ENCODE measurements at regions of chr22 and their contacts with region 1.

Region 1: DNA sequence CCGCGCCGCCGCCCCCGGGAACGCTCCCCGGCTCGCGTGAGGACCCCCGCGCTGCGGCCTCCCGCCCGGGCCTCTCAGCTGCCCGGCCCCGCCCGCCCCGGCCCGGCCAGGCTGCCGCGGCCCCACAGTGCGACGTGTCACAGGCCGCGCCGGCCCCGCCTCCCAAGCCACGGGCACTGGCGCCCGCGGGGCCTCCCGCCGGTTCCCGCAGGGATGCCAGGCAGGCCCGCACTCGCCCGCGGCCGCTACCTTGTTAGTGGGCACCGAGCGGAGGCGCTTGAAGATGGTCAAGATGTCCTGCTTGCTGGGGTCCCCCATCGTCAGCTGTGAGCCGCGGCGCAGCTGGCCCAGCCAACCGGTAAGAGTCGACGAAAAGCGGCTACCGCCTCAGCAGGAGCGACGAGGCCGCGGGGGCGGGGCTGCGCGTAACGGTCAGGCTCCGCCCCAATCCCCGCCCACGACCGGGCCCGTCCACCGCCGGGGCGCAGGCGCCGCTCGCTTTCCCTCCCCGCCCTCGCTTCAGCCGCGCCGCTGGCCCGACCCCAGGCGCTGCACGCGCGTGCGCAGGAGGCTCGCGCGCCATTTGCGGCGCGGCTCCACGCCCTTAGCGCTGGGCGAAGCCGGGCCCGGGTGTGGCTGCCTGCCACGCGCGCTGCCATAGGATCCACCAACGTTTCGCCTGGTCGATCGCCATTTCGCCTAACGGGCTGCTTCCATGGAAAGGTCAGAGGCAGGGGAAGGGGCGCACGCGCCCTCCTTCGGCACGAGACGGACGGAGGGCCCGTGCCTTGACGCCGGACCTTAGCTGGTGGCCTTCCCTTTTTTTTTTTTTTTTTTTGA is at the start of gene ARFGAP3:
- DNase-seq: peak; percentile 96
- H3K4me3 Mint-ChIP-seq: peak within 1 kb of the TSS; percentile 86
- H3K27ac Mint-ChIP-seq: peak within 1 kb of the TSS; percentile 90
- H3K4me1 Mint-ChIP-seq: peaks cover 10% of the 10 kb centered on the region
- H3K27me3 Mint-ChIP-seq: no peaks in the 10 kb centered on the region
- total RNA-seq, gene ARFGAP3: 40.6 to 45.5 TPM

Region 2: DNA sequence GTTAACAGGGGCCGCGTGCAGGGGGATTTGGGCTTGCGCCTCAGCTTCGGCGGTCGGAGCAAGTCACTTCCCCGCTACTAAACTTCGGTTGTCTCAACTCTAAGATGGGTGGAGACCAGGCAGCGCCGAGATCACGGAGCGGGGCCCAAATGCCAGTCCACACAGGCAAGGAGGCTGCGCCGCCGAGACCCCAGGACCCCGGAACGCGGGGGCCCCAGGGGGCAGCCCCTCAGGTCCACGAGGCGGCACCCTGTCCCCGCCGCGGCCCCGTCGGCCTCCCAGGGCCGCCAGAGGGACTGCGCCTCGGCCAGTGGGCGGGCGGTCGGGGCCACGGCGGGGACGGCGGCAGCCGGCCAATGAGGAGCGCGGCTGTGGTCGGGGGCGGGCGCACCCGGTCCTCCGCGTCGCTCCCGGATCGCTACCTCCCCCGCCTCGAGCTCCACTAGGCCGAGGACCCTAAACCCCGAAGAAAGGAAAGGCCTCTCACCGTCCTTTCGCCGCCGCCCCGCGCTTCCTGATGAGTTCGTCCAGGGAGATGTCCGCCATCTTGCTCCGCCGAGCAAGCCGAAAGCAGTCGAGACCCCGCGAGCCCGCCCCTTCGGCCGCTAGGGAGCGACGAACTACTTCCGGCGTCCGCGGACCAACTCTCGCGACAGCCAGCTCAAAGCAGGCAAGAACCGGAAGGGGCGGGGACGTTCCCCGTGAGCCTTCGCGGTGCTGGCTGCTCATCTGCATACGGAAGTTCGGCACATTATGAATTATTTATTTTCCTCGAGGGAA is 242.6 kb before region 1 on chr22 and contains the start of gene POLDIP3:
- CTCF ChIA-PET with region 1: no interaction called
- POLR2A ChIA-PET with region 1: interaction called, 13 read pairs
- intact Hi-C with region 1: loop called (anchors 2 kb)
- DNase-seq: peak; percentile 99
- H3K4me3 Mint-ChIP-seq: peak within 1 kb of the TSS; percentile 94
- H3K27ac Mint-ChIP-seq: peak within 1 kb of the TSS; percentile 96
- H3K4me1 Mint-ChIP-seq: peaks cover 49% of the 10 kb centered on the region
- H3K27me3 Mint-ChIP-seq: peaks cover 3% of the 10 kb centered on the region
- total RNA-seq, gene POLDIP3: 64.6 to 75.3 TPM

Region 3: GRCh38 chr22:42794551-42795510 is 62.3 kb before region 1 on chr22:
- CTCF ChIA-PET with region 1: no interaction called
- POLR2A ChIA-PET with region 1: no interaction called
- intact Hi-C with region 1: no loop called
- DNase-seq: no peak
- H3K4me3 Mint-ChIP-seq: no peak overlapping the region
- H3K27ac Mint-ChIP-seq: no peak overlapping the region
- H3K4me1 Mint-ChIP-seq: no peaks in the 10 kb centered on the region
- H3K27me3 Mint-ChIP-seq: no peaks in the 10 kb centered on the region

Region 4: DNA sequence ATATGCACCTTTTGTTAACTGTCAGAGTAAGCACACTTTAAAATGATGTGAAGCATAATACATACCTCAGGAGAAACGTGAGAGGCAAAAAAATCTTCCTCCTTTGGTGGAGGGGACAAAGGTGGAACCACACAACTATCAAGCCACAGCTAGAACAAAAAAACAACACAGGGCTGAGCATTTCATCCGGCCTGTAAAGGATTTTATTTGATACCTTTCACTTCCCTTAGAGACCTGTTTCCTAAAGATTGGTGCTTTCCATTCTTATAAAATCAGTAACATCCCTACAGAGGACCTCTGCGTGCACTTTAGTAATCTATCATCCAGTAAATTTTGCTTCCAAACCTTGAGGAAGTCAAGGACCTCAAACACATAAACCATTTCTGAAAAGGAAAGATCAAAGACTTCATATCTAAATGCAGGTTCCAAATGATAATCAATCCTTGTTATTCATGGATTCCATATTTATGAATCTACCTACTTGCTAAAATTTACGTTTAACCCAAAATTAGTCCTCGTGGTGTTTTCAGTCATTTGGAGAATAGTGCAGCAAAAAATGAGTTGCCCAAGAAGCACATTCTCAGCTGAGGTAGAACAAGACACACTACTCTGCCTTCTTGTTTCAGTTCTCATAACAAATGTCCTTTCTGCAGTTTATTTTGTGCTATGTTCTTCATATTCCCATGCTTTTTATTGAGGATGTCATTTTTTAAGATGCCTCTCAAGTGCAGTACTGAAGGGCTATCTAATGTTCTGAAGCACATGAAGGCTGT is 22.7 kb before region 1 on chr22:
- CTCF ChIA-PET with region 1: no interaction called
- POLR2A ChIA-PET with region 1: no interaction called
- intact Hi-C with region 1: no loop called
- DNase-seq: no peak
- H3K4me3 Mint-ChIP-seq: no peak overlapping the region
- H3K27ac Mint-ChIP-seq: peak overlapping the region; percentile 9
- H3K4me1 Mint-ChIP-seq: peaks cover 2% of the 10 kb centered on the region
- H3K27me3 Mint-ChIP-seq: no peaks in the 10 kb centered on the region

Region 5: DNA sequence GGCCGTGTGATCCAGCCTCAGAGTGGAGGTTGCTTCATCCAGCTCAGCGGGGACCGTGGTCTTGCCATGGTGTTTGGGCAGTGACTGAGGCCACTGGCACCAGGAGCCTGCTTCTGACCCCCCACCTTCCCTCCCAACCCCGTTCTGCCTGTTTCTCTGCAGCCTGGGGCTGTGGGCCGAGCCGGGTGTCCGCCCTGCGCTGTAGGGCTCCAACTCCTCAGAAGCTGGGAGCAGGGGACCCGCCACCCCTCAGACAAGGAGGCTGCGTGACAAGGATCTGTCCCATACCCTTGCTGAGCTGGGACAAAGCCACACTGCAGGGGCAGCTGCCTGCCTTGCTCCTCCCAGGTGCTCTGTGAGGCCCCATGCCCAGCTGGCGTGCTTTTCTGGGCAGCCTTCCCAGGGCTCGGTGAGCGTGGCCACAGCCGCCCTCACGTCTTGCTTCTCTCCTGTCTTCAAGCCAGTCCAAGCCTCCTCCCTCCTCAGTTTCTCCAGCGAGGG is 11.7 kb after region 1 on chr22:
- CTCF ChIA-PET with region 1: interaction called, 39 read pairs
- POLR2A ChIA-PET with region 1: interaction called, 12 read pairs
- intact Hi-C with region 1: no loop called
- DNase-seq: no peak
- H3K4me3 Mint-ChIP-seq: no peak overlapping the region
- H3K27ac Mint-ChIP-seq: no peak overlapping the region
- H3K4me1 Mint-ChIP-seq: peaks cover 5% of the 10 kb centered on the region
- H3K27me3 Mint-ChIP-seq: no peaks in the 10 kb centered on the region

Region 6: GRCh38 chr22:43014869-43015676 is 158.0 kb after region 1 on chr22 and contains the start of gene PACSIN2:
- CTCF ChIA-PET with region 1: interaction called, 3 read pairs
- POLR2A ChIA-PET with region 1: interaction called, 10 read pairs
- intact Hi-C with region 1: loop called (anchors 5 kb)
- DNase-seq: peak; percentile 99
- H3K4me3 Mint-ChIP-seq: peak within 1 kb of the TSS; percentile 93
- H3K27ac Mint-ChIP-seq: peak within 1 kb of the TSS; percentile 82
- H3K4me1 Mint-ChIP-seq: peaks cover 23% of the 10 kb centered on the region
- H3K27me3 Mint-ChIP-seq: no peaks in the 10 kb centered on the region
- total RNA-seq, gene PACSIN2: 35.0 to 35.9 TPM

Region 7: GRCh38 chr22:43187171-43188099 is 330.4 kb after region 1 on chr22:
- CTCF ChIA-PET with region 1: interaction called, 3 read pairs
- POLR2A ChIA-PET with region 1: no interaction called
- intact Hi-C with region 1: loop called (anchors 2 kb)
- DNase-seq: peak; percentile 98
- H3K4me3 Mint-ChIP-seq: peak overlapping the region; percentile 84
- H3K27ac Mint-ChIP-seq: peak overlapping the region; percentile 93
- H3K4me1 Mint-ChIP-seq: peaks cover 21% of the 10 kb centered on the region
- H3K27me3 Mint-ChIP-seq: no peaks in the 10 kb centered on the region

Measured in activated CD4-positive, alpha-beta memory T cell treated with anti-CD3 and anti-CD28 coated beads for 36 hours (primary cell).